Left cardiac atrium (tissue), 4 donors: ENCODE measurements at regions of chr19 and their contacts with region 1.

Region 1: DNA sequence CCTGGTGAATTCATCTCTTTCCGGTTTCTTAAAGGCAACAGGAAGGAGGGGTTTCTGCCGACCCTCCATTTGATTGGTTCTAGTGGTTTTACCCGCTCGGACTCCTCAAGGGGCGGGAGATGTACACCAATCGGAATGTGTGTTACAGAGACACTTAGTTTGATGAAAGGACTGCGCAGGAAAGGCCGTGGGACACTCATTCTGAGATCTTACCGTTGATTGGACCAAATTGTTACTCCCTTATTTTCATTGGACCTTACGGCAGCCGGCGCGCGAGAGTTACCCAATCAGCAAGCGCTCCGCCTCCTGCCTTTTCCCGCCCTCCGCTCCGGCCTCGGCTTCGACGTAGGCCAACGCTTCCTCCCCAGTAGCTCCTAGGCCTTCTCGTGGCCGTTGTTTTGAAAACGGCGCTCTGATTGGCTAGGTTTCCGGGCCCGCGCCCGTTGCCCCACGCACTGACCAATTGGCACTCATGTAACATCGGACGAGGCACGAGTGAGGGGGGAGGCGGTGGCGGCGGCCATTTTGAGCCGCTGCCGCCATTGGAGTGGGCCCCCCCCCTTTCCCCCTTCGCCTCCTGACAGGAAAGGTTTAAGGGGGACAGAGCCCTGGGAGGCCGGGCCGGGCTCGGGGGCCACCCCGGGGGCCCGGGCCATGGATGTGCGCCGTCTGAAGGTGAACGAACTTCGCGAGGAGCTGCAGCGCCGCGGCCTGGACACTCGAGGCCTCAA is at the start of gene HNRNPUL1:
- DNase-seq: peak; percentile 98
- ATAC-seq: peak; percentile 85 to 87
- total RNA-seq, gene HNRNPUL1: 116 to 147 TPM

Region 2: GRCh38 chr19:41206926-41207750 is 56.9 kb before region 1 on chr19:
- intact Hi-C with region 1: loop called (anchors 1 to 2 kb)
- DNase-seq: peak; percentile 85
- ATAC-seq: peak; percentile 78 to 79

Region 3: GRCh38 chr19:41226053-41226873 is 37.8 kb before region 1 on chr19:
- intact Hi-C with region 1: loop called in 1 of 2 experiments (anchors 2 kb)
- DNase-seq: peak; percentile 73
- ATAC-seq: peak; percentile 82 to 84